Sigmoid colon (tissue), 7 donors: ENCODE measurements at regions of chr12 and their contacts with region 1.

Region 1: GRCh38 chr12:122500685-122501488 is at the start of gene ZCCHC8:
- DNase-seq: peak; percentile 98
- H3K4me3 ChIP-seq: peak within 1 kb of the TSS; percentile 70 to 96 (median 81)
- H3K27ac ChIP-seq: peak within 1 kb of the TSS; percentile 96 to 99 (median 98)
- H3K4me1 ChIP-seq: peaks cover 0 to 36% (median 28%) of the 10 kb centered on the region in 4 donors
- H3K27me3 ChIP-seq: no peaks in the 10 kb centered on the region
- CTCF ChIP-seq: no peak
- EP300 ChIP-seq: peak in 1 of 4 donors; percentile 52
- POLR2A ChIP-seq: peak; percentile 93 to 96
- total RNA-seq, gene ZCCHC8: 16.8 to 21.4 (median 20.7) TPM

Region 2: DNA sequence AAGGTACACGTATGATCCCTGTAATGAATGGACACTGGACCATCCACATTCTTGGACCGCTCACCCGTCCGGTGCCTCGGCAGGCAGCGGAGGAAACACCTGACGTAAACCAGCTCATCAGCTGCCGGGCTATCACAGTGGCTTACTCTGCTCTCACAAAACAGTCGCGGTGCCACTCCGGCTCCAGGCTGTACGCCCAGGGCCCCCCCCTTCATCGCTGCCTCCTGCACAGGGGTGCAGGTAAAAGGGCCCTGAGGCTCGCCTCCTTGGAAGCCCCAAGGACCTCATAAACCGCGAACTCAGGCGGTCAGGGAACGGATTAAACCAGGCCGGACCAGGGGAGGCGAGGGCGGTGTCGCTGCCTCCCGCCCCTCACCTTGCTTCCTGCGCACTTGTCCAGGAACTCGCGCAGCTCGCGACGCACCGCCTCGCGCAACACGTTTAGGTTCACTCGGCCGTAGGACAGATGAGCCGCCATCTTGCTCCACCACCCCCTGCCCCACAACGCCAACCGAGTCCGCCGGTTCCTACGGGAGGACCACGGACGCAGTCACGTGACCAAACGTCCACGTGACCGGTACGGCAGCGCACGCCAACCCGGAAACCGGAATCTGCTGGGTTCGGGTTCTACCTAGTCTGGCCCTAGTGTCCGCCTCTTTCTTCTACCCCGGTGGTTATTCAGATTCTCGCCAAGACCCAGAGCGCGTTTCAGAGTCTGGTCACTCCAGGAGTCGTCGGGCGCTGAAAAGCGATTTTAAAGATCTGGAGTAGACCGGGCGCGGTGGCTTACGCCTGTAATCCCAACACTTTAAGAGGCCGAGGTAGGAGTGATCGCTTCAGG is 234.7 kb before region 1 on chr12 and contains the start of gene VPS33A:
- intact Hi-C with region 1: loop called (anchors 5 kb)
- DNase-seq: peak; percentile 99
- H3K4me3 ChIP-seq: peak within 1 kb of the TSS; percentile 76 to 91 (median 84)
- H3K27ac ChIP-seq: peak within 1 kb of the TSS; percentile 87 to 91 (median 90)
- H3K4me1 ChIP-seq: peaks cover 0 to 17% (median 12%) of the 10 kb centered on the region in 4 donors
- H3K27me3 ChIP-seq: no peaks in the 10 kb centered on the region
- CTCF ChIP-seq: peak in 1 of 4 experiments; percentile 5
- EP300 ChIP-seq: peak in 1 of 4 donors; percentile 57
- POLR2A ChIP-seq: peak in 1 of 2 donors; percentile 21
- total RNA-seq, gene VPS33A: 13.0 to 17.8 (median 16.4) TPM

Region 3: DNA sequence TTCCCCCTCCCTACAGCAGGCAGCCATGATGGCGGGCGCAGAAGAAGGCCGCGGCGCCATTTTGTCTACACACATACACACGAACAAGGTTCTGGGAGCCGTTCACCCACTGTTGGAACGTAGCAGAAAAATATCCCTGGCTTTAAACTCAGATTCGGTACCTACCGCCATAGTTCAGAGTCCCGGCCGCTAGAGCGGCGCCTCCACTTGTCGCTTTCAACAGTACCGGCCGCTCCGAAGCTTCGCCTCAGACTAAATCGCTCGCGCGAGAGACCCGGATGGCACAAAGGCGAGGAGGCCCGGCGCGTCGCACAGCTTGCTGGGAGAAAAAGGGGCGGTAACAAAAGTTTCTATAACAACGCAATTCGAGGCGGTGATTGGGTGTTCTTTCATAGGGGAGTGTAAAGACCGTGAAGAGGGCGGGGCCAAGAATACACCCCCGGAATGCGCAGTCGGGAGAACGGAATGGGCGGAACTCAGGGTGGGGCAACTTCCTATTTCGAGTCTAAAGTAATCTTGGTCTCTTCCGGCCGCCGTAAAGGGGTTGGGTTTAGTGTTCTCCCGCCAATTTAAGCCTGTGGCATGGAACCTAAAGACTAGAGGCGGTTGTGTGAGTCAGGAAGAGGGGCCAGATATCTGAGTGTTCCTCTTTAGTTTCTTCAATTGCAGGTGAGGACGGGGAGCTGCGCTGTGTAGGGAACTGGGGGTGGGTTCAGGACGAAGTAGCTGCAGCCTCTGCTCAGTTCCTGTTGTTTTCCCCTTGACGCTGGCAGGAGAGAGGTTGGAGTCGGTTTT is 26.0 kb after region 1 on chr12 and contains the starts of genes KNTC1 and RSRC2:
- intact Hi-C with region 1: loop called (anchors 1 kb)
- DNase-seq: peak; percentile 99
- H3K4me3 ChIP-seq: peak within 1 kb of the TSS; percentile 57 to 79 (median 66)
- H3K27ac ChIP-seq: peak within 1 kb of the TSS; percentile 87 to 95 (median 94)
- H3K4me1 ChIP-seq: peaks cover 0 to 49% (median 45%) of the 10 kb centered on the region in 4 donors
- H3K27me3 ChIP-seq: no peaks in the 10 kb centered on the region
- CTCF ChIP-seq: no peak
- EP300 ChIP-seq: peak in 2 of 4 donors; percentile 10 to 34
- POLR2A ChIP-seq: peak; percentile 96 to 97
- total RNA-seq, gene KNTC1: 5.8 to 13.8 (median 9.1) TPM
- total RNA-seq, gene RSRC2: 60.9 to 79.9 (median 68.8) TPM

Region 4: DNA sequence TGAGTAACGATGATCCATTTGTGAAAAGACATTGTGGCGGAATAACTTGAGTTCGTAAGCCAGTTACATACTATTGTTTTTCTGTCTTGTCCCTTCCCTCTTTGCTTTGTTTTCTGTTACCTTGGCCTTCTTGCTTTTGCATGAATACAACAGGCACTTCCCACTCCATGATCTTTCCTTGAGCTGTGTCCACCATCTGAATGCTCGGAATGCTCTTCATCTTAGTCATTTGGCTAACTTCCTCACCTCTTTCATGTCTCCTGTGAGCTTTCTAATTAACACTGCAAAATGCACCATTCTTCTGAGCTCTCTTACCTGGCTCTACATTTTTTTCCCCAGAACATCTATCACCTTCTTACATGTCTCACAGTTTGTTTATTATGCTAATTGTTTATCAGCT is 36.1 kb after region 1 on chr12:
- intact Hi-C with region 1: no loop called
- DNase-seq: no peak
- H3K4me3 ChIP-seq: no peak overlapping the region
- H3K27ac ChIP-seq: no peak overlapping the region
- H3K4me1 ChIP-seq: no peaks in the 10 kb centered on the region
- H3K27me3 ChIP-seq: no peaks in the 10 kb centered on the region
- CTCF ChIP-seq: no peak
- EP300 ChIP-seq: no peak
- POLR2A ChIP-seq: no peak